ENCODE measurements at regions of chr4 and their contacts with region 1.

Region 1: DNA sequence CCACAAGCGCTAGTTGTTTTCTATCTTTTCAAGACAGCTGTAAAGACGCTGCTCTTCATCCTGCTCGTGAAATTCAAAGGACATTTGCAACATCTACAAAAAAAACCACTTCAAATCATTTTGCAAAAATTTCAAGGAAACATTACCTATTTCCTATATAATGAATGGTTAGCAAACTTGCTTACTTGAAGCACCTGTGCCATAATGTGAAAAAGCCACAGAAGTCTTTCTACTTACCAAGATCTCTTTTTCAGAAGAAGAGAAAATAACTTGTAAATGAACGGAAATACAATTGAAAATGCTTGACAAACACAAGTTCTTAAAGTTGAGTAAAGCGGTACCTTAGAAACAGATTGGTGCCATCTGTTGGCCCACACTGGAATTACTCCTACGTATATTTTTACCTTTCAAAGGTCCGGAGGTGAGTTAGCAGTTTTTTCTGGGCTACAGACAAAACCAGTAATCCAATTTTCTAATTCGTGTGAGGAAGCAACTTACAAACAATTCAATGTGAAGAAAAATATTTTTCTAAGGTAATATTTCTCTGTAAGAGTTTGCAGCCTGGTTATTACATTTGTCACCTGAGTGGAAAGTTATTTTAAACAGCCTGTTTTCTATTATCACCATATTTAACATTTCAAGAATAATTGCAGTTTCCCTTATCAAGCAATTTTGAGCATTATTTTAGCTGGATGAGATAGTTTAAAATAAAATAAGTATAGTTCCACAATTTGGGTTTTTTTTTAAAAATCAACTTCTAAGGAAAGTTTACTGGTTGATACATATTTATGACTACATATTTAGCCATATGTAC is at the start of gene TLR6:
- DNase-seq: peak; percentile 70
- H3K4me3 Mint-ChIP-seq: peak within 1 kb of the TSS; percentile 77
- H3K27ac Mint-ChIP-seq: peak within 1 kb of the TSS; percentile 89
- H3K4me1 Mint-ChIP-seq: peaks cover 35% of the 10 kb centered on the region
- H3K27me3 Mint-ChIP-seq: peaks cover 4% of the 10 kb centered on the region
- total RNA-seq, gene TLR6: 1.4 to 2.2 TPM

Region 2: DNA sequence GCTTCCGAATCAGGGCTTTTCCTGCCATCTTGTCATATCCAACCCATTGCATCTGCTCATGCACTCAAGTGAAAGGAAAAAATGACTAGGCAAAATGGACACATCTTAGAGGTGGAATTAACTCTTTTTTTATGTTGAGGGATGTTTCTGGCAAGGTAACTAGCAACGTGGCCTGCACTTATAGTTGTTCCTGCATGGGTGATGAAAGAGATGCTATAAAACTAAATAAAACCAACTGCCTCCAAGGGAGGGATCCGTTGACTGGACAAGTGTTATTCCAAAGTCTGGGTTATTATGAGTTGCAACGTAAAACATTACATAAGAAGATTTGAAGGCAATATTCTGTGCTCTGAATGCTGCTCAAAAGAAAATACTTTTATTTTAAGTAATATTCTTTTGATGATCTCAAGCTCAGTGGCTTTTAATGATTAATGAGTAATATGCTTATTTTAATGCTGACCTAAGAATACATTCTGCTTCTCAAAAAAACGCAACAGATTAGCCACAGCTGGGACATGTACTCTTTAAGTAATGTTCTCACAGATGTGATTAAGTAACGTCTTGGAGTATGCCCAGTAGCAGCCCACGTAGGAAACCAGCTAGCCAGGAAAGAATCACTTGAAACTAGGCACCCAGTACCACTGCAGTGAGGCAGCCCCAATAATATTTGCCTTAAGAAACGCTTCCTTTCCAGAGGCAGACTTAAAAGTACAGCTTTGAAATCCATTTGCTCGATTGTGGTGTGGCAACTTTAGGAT is 165.3 kb before region 1 on chr4:
- CTCF ChIA-PET with region 1: no interaction called
- POLR2A ChIA-PET with region 1: no interaction called
- intact Hi-C with region 1: no loop called
- DNase-seq: no peak
- H3K4me3 Mint-ChIP-seq: no peak overlapping the region
- H3K27ac Mint-ChIP-seq: no peak overlapping the region
- H3K4me1 Mint-ChIP-seq: peaks cover 22% of the 10 kb centered on the region
- H3K27me3 Mint-ChIP-seq: no peaks in the 10 kb centered on the region

Region 3: DNA sequence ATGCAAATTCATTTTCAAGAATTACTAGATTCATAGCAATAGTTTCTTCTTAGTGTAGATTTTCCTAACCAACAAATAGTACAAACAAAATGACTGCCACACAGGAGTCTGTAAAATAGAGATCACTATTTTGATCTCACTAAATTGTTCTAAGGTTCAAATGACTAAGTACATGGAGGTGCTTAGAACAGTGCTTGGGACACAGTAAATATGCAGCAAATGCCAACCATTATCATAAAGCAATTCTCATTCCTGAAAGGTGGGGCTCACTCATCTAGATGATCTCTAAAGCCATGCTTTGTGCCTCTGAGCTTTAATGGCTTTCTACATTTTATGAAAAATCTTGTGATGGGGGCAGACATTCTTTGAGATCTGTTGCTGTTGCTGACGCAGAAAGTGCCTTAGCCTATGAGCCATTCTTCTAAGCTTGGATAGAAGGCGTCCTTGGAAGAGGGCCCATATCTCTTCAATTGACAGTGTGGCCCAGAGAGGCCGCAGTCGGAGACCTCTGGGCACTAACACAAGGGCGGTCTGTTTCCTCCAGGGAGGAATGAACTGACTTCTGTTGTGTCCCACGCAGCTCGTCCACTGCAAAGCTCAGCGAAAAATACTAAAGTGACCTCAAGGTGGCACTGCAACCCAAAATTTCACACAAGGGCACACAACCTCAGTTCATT is 97.5 kb before region 1 on chr4:
- CTCF ChIA-PET with region 1: interaction called, 107 read pairs
- POLR2A ChIA-PET with region 1: no interaction called
- intact Hi-C with region 1: loop called (anchors 1 kb)
- DNase-seq: peak; percentile 74
- H3K4me3 Mint-ChIP-seq: no peak overlapping the region
- H3K27ac Mint-ChIP-seq: no peak overlapping the region
- H3K4me1 Mint-ChIP-seq: peaks cover 7% of the 10 kb centered on the region
- H3K27me3 Mint-ChIP-seq: no peaks in the 10 kb centered on the region

Region 4: DNA sequence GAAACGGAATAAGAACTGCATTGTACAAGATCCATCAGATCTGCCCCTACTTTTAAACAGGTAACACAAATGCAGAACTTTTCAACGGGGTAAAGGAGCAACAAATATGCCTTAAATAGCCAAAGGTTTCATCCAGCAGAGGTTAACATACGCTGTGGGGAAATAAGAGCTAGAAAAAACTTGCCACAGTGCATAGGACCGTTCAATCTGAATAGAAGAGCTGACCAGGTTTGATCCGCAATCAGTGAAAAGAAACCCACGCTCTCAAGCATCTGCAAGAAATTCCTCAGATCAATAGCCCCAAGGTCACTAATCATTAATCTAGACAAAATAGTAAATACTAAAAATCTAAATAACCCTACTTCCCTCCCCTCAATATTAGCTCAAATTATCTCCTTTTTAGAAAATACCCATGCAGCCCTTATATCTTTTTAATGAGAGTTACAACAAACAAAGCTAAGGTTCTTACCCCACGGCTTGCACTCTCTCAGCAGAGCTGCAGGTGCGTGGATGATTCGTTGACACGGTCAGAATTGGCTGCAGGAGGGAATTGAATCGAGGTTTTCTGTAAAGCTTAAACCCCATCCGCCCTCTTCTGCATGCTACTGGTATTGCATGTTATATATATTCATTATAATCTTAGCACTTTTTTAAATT is 74.2 kb before region 1 on chr4 and contains the start of gene TLR10:
- CTCF ChIA-PET with region 1: interaction called, 28 read pairs
- POLR2A ChIA-PET with region 1: no interaction called
- intact Hi-C with region 1: no loop called
- DNase-seq: peak; percentile 35
- H3K4me3 Mint-ChIP-seq: peak within 1 kb of the TSS; percentile 23
- H3K27ac Mint-ChIP-seq: no peak within 1 kb of the TSS
- H3K4me1 Mint-ChIP-seq: peaks cover 4% of the 10 kb centered on the region
- H3K27me3 Mint-ChIP-seq: peaks cover 2% of the 10 kb centered on the region
- total RNA-seq, gene TLR10: 0.05 TPM in 1 of 2 experiments, not detected in the other

Region 5: DNA sequence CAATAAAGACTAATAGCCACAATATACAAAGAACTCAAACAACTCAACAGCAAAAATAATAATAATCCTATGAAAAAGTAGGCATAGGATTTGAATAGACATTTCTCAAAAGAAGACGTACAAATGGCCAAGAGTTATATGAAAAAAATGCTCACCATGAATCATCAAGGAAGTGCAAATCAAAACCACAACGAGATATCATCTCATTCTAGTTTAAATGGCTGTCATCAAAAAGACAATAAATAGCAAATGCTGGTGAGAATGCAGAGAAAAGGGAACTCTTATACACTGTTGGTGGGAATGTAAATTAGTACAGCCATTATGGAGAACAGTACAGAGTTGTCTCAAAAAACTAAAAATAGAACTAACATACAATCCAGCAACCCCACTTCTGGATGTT is 18.9 kb before region 1 on chr4:
- CTCF ChIA-PET with region 1: interaction called, 8 read pairs
- POLR2A ChIA-PET with region 1: no interaction called
- intact Hi-C with region 1: loop called (anchors 2 kb)
- DNase-seq: no peak
- H3K4me3 Mint-ChIP-seq: peak overlapping the region; percentile 24
- H3K27ac Mint-ChIP-seq: peak overlapping the region; percentile 42
- H3K4me1 Mint-ChIP-seq: peaks cover 19% of the 10 kb centered on the region
- H3K27me3 Mint-ChIP-seq: no peaks in the 10 kb centered on the region

Region 6: DNA sequence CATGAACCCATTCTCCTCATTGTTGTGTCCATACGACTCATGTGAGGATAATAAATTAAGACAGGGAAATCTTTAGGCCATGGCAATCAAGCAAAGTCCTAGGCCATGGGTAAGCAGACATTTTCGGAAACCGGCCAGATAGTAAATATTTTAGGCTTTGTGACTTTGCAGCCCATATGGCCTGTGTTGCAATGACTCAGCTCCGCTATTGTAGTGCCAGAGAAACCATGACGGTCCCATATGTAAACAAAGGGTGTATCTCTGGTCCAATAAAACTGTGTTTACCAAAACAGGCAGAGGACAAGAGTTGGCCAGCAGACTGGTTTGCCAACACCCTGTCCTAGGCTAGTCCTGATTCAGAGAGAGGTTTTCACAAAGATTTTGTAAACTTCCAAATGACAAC is 15.9 kb after region 1 on chr4:
- CTCF ChIA-PET with region 1: interaction called, 52 read pairs
- POLR2A ChIA-PET with region 1: no interaction called
- intact Hi-C with region 1: no loop called
- DNase-seq: no peak
- H3K4me3 Mint-ChIP-seq: no peak overlapping the region
- H3K27ac Mint-ChIP-seq: no peak overlapping the region
- H3K4me1 Mint-ChIP-seq: peaks cover 3% of the 10 kb centered on the region
- H3K27me3 Mint-ChIP-seq: peaks cover 19% of the 10 kb centered on the region

Region 7: DNA sequence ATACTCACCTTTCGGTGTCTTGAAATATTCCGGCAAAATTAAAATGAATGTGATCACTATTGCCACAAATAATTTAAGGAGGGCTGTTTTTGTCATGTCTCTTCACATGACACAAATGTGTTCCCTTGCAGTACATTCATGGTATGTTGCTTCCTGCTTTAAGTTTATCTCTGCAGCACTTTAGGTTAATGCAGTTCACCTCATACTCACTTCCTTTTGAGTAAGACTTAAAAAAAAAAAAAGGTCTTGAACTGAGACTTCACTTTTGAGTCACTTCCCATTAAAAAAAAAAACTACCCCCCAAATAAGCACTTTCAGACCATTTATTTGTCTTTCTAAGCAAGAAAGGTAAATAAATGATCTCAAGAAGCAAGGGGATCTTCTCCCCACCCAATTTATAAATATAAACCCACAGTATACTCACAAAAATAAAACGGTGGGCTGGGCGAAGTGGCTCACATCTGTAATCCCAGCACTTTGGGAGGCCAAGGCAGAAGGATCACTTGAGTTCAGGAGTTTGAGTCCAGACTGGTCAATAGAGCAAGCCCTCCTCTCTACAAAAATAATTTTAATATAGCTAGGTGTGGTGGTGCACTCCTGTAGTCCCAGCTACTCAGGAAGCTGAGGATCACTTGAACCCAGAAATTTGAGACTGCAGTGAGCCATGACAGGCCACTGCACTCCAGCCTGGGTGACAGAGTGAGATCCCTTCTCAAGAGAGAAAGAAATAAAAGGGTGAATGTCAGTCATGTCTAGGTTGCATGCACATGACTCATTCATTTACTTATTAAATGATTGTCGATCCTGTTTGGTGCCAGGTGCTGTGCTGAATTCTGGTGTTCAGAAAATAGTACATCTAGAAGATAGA is 175.7 kb after region 1 on chr4 and contains the start of gene TMEM156:
- CTCF ChIA-PET with region 1: no interaction called
- POLR2A ChIA-PET with region 1: no interaction called
- intact Hi-C with region 1: loop called (anchors 2 kb)
- DNase-seq: peak; percentile 71
- H3K4me3 Mint-ChIP-seq: peak within 1 kb of the TSS; percentile 78
- H3K27ac Mint-ChIP-seq: peak within 1 kb of the TSS; percentile 87
- H3K4me1 Mint-ChIP-seq: peaks cover 47% of the 10 kb centered on the region
- H3K27me3 Mint-ChIP-seq: no peaks in the 10 kb centered on the region
- total RNA-seq, gene TMEM156: 28.0 to 28.4 TPM

Region 8: DNA sequence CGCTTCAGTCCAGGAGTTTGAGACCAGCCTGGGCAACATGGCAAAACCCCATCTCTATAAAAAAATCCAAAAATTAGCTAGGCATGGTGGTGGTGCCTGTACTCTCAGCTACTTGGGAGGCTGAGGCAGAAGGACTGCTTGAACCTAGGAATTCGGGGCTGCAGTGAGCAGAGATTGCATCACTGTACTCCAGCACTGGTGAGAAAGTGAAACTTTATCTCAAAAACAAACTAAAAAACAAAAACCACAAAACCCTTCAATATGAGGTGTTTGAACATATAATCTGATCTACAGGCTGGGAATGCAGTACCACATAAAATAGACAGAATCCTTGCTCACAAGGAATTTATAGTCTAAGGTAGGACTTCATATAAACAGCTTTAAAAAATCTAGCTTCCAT is 1017.1 kb after region 1 on chr4:
- CTCF ChIA-PET with region 1: no interaction called
- POLR2A ChIA-PET with region 1: no interaction called
- intact Hi-C with region 1: no loop called
- DNase-seq: no peak
- H3K4me3 Mint-ChIP-seq: no peak overlapping the region
- H3K27ac Mint-ChIP-seq: no peak overlapping the region
- H3K4me1 Mint-ChIP-seq: peaks cover 17% of the 10 kb centered on the region
- H3K27me3 Mint-ChIP-seq: no peaks in the 10 kb centered on the region